Motor neuron (in vitro differentiated cells): ENCODE measurements at regions of chr2 and their contacts with region 1.

Region 1: DNA sequence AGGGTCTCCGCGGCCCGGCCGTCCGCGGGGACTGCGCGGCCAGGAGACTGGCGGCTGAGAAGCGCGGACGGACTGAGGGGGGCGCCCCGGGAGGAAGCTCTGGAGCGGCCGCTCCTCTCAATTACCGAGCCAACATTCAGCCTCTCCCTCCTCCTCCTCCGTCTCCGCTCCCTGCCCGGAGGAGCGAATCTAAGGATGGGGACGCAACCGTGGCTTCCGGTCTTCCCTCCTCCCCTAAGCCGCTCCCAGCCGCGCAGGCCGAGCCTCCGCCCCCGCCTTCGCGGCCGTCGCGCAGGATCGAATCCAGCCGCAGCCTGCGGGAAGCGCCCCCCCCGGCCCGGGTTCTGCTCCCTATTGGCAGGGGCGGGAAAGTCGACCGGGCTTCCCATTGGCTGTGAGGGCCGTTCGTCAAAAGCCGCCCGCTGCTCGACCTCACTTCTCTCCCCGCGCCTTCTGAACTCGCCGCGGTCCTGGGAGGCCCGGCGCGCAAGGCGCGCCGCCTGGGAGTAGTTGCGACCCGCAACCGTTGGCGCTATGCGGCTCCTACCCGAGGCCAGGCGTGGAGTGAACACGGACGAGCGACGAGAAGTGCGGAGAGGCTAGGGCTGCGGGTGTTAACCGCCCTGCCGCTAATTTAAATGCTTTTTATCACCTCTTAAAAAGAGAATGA is at the start of gene HNRNPLL:
- ATAC-seq: peak; percentile 85 to 92 (median 90)
- H3K4me3 ChIP-seq: peak within 1 kb of the TSS; percentile 67 to 80 (median 70)
- H3K27ac ChIP-seq: peak within 1 kb of the TSS; percentile 93 to 95
- H3K4me1 ChIP-seq: peaks cover 17 to 24% of the 10 kb centered on the region in 2 donors
- total RNA-seq, gene HNRNPLL: 28.2 to 71.5 (median 46.2) TPM

Region 2: DNA sequence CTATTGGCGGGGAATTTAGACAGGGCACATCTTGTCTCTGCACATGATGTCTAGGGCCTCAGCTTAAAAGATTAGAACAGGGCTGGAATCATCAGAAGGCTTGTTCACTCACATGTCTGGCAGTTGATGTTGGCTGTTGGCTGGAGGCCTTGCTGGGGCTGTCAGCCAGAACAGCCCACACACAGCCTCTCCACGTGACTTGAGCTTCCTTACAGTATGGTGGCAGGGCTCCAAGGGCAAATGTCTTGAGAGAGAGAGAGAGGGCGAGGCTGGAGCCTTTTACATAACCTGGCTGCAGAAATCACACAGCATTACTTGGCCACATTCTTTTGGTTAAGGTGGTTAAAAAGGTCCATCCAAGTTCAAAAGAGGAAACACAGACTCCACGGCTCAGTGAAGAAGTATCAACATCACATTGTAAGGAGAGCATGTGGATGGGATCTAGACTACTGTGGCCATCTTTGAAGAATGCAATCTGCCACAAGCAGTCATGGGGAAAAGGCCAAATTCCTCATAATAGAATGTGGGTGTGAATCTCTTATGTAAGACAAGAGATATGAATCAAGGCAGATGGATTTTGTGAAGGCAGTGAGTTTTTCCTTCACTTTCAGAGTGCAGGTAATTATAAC is 117.9 kb after region 1 on chr2:
- in situ Hi-C with region 1: loop called in 1 of 9 experiments (anchors 25 kb)
- ATAC-seq: peak in 2 of 8 experiments; percentile 76 to 87
- H3K4me3 ChIP-seq: no peak overlapping the region
- H3K27ac ChIP-seq: no peak overlapping the region
- H3K4me1 ChIP-seq: no peaks in the 10 kb centered on the region

Region 3: GRCh38 chr2:38734299-38735058 is 131.6 kb after region 1 on chr2:
- in situ Hi-C with region 1: loop called in 1 of 9 experiments (anchors 10 kb)
- ATAC-seq: peak in 2 of 8 experiments; percentile 11 to 46
- H3K4me3 ChIP-seq: no peak overlapping the region
- H3K27ac ChIP-seq: no peak overlapping the region
- H3K4me1 ChIP-seq: peaks cover 0 to 6% of the 10 kb centered on the region in 2 donors